ENCODE measurements at regions of chr7 and their contacts with region 1.

Region 1: DNA sequence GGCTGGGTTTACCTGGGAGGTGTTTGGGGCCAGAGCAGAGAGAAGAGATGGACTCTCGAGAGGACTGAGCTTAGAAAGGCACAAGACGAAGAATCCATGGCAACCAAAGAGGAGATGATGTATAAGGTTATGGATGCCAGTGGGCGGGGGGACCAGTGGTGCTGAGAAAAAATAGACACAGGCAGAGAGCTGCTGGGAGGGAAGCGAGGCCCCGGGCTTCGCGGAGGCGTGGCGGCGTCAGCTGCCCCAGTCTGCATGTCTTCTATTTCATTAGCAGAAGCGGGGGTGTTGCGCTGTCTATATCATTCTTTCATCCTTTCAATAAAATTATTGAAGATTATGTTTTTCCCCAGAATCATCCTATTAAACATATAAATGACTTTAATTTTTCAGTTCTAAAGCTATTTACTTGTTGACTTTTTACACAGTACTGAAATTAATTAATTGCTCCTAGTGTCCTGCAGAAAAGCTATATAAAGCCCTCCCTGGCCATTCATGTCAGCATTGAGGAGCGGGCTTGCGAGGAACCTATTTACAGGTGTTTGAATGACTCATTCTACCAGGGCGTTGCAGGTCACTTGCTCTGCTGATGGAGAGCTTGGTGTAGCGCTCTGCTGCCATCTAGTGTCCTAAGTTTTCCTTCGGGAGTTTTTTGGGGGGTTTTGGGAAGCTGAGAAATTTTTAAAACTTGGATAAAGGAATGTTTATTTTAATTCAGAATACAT is 42.9 kb upstream of the BHLHA15 start:
- DNase-seq: peak; percentile 91
- H3K4me3 ChIP-seq: no peak overlapping the region
- H3K27ac ChIP-seq: no peak overlapping the region
- H3K4me1 ChIP-seq: peaks cover 0 to 14% of the 10 kb centered on the region in 2 experiments; a peak in 2 of 4 replicates
- H3K27me3 ChIP-seq: no peaks in the 10 kb centered on the region
- CTCF ChIP-seq: peak; percentile 100
- EP300 ChIP-seq: no peak
- RAD21 ChIP-seq: peak; percentile 95

Region 2: DNA sequence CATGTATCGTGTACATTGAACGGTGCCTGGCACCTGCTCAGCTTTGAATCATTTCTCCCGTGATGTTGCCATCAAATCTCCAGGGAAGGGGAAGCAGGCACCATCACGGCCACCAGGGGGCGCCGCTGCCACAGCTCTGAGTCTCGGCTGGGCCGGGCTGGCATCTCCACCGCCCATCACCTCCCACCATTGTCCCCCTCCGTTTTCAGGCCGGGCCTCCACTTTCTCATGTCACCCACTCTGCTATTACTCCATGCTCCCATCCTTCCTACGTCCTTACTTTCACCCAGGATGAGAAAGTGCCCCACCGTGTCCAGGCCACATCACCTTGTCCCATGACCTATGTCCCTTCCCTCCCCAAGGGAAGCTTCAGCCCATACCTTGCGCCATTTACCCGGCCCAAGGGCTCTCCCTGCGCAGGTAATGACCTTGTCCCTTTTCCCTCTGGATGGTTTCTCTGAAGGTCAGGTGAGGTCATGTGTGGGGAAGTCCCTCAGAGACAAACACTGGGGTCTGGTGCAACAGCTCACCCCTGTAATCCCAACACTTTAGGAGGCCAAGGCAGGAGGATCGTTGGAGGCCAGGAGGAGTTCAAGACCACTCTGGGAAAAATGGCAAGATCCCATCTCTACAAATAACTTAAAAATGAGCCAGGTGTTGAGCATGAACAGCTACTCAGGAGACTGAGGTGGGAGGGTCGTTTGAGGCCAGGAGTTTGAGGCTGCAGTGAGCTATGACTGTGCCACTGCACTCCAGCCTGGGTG is 146.6 kb before region 1 on chr7:
- CTCF ChIA-PET with region 1: interaction called, 744 read pairs
- POLR2A ChIA-PET with region 1: interaction called, 3 read pairs
- DNase-seq: peak; percentile 91
- H3K4me3 ChIP-seq: no peak overlapping the region; a peak in 1 of 4 replicates
- H3K27ac ChIP-seq: no peak overlapping the region
- H3K4me1 ChIP-seq: no peaks in the 10 kb centered on the region; a peak in 1 of 4 replicates
- H3K27me3 ChIP-seq: peaks cover 6% of the 10 kb centered on the region; the same call in 1 of the 2 replicates
- CTCF ChIP-seq: peak; percentile 98
- EP300 ChIP-seq: no peak
- RAD21 ChIP-seq: peak; percentile 97

Region 3: GRCh38 chr7:98086281-98086718 is 82.0 kb before region 1 on chr7:
- CTCF ChIA-PET with region 1: interaction called, 34 read pairs
- POLR2A ChIA-PET with region 1: interaction called, 3 read pairs
- DNase-seq: no peak
- H3K4me3 ChIP-seq: no peak overlapping the region
- H3K27ac ChIP-seq: no peak overlapping the region
- H3K4me1 ChIP-seq: no peaks in the 10 kb centered on the region
- H3K27me3 ChIP-seq: peaks cover 26% of the 10 kb centered on the region; the same call in 1 of the 2 replicates
- CTCF ChIP-seq: no peak
- EP300 ChIP-seq: no peak
- RAD21 ChIP-seq: no peak

Region 4: DNA sequence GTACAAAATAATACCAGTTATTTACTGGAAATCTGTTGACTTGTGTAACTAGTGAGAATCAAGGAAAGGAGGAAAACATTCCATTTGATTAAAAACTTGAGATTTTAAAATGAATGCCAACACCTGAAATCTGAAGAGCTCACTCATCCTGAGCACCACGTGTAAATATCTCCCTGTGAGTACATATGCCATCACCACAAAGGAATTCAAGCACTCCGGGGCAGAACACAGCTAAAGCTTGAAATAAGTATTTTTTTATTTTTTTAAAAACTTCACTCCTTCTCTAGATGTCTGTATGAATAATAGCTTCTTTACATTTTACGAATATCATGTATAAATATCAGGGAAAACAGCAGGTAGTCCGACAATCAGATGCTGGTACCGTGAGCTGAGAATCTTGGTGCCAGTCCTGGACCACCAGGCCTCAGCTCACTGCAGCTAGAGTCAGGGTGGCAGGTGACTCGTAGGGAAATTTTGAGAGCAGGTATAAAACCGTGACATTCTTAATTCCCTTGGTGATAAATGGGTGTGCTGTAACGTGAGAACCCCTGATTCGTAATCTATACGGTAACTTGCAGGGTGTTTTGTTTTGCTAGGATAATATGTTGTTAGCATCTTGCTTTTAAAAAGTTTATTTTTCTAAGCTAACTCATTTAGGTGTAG is 49.0 kb before region 1 on chr7:
- CTCF ChIA-PET with region 1: interaction called, 328 read pairs
- POLR2A ChIA-PET with region 1: no interaction called
- DNase-seq: no peak
- H3K4me3 ChIP-seq: no peak overlapping the region
- H3K27ac ChIP-seq: peak overlapping the region in 1 of 2 experiments; percentile 54; a peak in 2 of 4 replicates
- H3K4me1 ChIP-seq: peaks cover 10 to 18% of the 10 kb centered on the region in 2 experiments; a peak in 3 of 4 replicates
- H3K27me3 ChIP-seq: no peaks in the 10 kb centered on the region
- CTCF ChIP-seq: no peak
- EP300 ChIP-seq: peak in 1 of 2 experiments; percentile 44; a peak in 1 of 4 replicates
- RAD21 ChIP-seq: no peak

Region 5: DNA sequence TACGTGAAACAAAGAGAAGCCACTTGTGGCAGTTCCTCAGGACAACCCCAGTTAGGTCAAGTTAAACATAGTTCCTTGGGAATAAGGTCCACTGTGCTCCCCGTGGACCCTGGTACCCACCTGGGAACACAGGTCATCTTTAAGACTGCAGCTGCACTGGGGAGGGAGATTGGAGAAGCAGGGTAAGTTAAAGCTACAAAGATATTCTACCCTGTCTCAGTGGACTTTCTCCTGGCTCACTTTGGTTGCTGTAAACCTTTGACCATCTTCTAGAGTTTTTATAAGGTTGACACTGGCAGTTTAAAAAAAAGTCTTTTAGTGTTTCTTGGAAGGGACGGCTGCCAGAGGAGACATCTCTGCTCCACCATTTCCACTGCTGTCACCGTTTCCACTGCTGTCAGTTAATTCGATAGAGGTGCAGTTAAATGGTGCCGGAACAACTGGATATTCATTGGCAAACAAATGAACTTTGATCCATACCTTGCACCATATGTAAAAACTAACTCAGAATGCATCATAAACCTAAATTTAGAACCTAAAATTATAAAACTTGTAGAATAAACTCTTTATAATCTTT is 19.1 kb before region 1 on chr7:
- CTCF ChIA-PET with region 1: interaction called, 51 read pairs
- POLR2A ChIA-PET with region 1: no interaction called
- DNase-seq: no peak
- H3K4me3 ChIP-seq: no peak overlapping the region
- H3K27ac ChIP-seq: no peak overlapping the region
- H3K4me1 ChIP-seq: no peaks in the 10 kb centered on the region
- H3K27me3 ChIP-seq: no peaks in the 10 kb centered on the region
- CTCF ChIP-seq: no peak
- EP300 ChIP-seq: no peak
- RAD21 ChIP-seq: no peak

Region 6: GRCh38 chr7:98186452-98187137 is 18.3 kb after region 1 on chr7:
- CTCF ChIA-PET with region 1: interaction called, 133 read pairs
- POLR2A ChIA-PET with region 1: no interaction called
- DNase-seq: no peak
- H3K4me3 ChIP-seq: peak overlapping the region in 1 of 2 experiments; percentile 35; a peak in 2 of 4 replicates
- H3K27ac ChIP-seq: peak overlapping the region in 1 of 2 experiments; percentile 89; a peak in 2 of 4 replicates
- H3K4me1 ChIP-seq: peaks cover 0 to 4% of the 10 kb centered on the region in 2 experiments; a peak in 1 of 4 replicates
- H3K27me3 ChIP-seq: no peaks in the 10 kb centered on the region
- CTCF ChIP-seq: no peak
- EP300 ChIP-seq: peak in 1 of 2 experiments; percentile 54; a peak in 1 of 4 replicates
- RAD21 ChIP-seq: no peak

Region 7: DNA sequence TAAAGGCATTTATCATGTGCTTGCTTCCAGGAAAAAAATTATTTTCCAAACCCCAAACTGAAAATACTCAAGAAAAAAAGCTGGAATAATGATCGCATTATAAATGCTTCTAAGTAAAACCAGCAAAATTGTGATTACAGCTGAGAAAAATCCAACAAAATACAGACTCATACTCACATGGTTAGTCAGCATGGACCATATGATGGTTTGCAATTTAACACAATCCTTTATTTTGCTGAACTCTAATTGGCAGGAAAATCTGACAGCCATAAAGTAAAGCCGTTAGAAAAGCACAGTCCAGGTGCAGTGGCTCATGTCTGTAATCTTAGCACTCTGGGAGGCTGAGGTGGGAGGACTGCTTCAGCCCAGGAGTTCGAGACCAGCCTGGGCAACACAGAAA is 172.8 kb after region 1 on chr7:
- CTCF ChIA-PET with region 1: no interaction called
- POLR2A ChIA-PET with region 1: no interaction called
- DNase-seq: no peak
- H3K4me3 ChIP-seq: no peak overlapping the region
- H3K27ac ChIP-seq: no peak overlapping the region
- H3K4me1 ChIP-seq: peaks cover 0 to 5% of the 10 kb centered on the region in 2 experiments; a peak in 1 of 4 replicates
- H3K27me3 ChIP-seq: no peaks in the 10 kb centered on the region
- CTCF ChIP-seq: no peak
- EP300 ChIP-seq: no peak
- RAD21 ChIP-seq: no peak

Region 8: DNA sequence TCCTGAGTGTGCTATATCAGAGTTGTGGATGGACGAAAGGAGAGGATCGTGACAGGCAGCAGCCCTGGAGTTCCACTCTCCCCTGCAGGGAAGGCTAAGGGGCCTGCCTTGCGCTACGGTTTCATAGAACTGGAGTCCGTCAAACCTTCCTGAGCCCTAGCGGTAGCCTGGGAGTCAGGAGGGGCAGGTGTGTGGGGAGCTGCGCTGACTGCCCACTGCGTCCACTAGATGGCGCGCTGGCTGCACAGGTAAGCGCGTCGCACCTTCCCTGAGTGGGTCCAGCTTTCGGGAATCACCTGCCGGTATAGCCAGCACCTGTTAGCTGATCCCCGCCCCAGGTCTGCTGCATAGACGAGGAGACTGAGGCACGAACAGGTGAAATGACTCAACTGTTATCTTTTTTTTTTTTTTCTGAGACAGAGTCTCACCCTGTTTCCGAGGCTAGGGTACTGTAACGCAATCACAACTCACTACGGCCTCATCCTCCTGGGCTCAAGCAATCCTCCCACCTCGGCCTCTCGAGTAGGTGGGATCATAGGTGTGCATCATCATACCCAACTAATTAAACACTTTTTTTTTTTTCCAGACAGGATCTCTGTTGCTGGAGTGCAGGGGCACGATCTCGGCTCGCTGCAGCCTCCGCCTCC is 252.7 kb after region 1 on chr7:
- CTCF ChIA-PET with region 1: no interaction called
- POLR2A ChIA-PET with region 1: no interaction called
- DNase-seq: peak; percentile 87
- H3K4me3 ChIP-seq: peak overlapping the region in 1 of 2 experiments; percentile 45; a peak in 1 of 4 replicates
- H3K27ac ChIP-seq: no peak overlapping the region
- H3K4me1 ChIP-seq: peaks cover 3 to 6% of the 10 kb centered on the region in 2 experiments; a peak in 2 of 4 replicates
- H3K27me3 ChIP-seq: no peaks in the 10 kb centered on the region
- CTCF ChIP-seq: peak; percentile 100
- EP300 ChIP-seq: no peak
- RAD21 ChIP-seq: peak; percentile 81

Measured in SK-N-SH (cell line).